ENCODE measurements at regions of chr3 and their contacts with region 1.

Region 1: GRCh38 chr3:149717391-149718056 is 34.8 kb downstream of the COMMD2 start:
- DNase-seq: peak; percentile 79
- H3K4me3 ChIP-seq: no peak overlapping the region
- H3K27ac ChIP-seq: peak overlapping the region in 3 of 4 donors; percentile 2 to 38 (median 34)
- H3K4me1 ChIP-seq: peaks cover 0 to 7% (median 6%) of the 10 kb centered on the region in 4 donors
- H3K27me3 ChIP-seq: no peaks in the 10 kb centered on the region
- CTCF ChIP-seq: peak; percentile 74 to 80 (median 78)
- EP300 ChIP-seq: no peak
- POLR2A ChIP-seq: no peak

Region 2: GRCh38 chr3:149512209-149512782 is 205.2 kb before region 1 on chr3:
- intact Hi-C with region 1: loop called (anchors 1 kb)
- DNase-seq: peak; percentile 85
- H3K4me3 ChIP-seq: no peak overlapping the region
- H3K27ac ChIP-seq: no peak overlapping the region
- H3K4me1 ChIP-seq: peaks cover 0 to 17% (median 11%) of the 10 kb centered on the region in 4 donors
- H3K27me3 ChIP-seq: no peaks in the 10 kb centered on the region
- CTCF ChIP-seq: peak; percentile 67 to 81 (median 76)
- EP300 ChIP-seq: no peak
- POLR2A ChIP-seq: no peak

Region 3: DNA sequence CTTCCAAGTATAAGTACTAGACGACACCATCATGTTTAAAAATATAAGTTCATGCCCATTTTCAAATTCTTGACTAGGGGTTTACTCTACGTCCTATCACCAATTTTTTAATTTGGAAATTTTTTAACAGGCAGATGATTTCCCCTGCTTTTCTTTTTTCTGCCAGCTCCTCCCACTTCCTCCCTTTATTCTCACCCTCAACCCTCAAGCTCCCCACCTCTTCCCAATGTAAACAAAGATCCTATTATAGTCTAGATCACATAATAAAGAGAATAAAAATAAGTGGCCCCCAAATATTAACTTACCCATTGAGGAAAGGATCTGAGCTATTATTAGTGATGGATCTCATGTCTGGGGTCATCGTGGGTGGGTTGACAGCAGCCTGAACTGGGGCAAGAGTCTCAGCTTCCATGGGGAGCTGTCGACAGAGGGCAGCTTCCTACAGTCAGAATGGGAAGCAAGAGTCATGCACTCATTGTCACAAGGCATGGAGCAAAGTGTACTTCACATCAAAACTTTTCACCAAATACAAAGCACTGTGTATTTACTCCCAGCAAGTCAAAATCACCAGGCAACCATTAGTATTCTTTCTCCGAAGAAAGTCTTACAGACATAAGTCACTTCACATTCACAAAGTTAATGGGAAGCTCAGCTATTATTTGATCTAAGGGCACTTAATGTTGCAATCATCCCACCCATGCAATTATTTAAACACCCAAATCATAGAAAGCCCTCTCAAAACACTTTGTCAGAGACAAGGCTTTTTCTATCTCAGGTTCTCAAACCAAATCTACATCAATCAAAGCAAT is 189.8 kb before region 1 on chr3:
- intact Hi-C with region 1: loop called (anchors 5 kb)
- DNase-seq: no peak
- H3K4me3 ChIP-seq: no peak overlapping the region
- H3K27ac ChIP-seq: peak overlapping the region; percentile 52 to 66 (median 56)
- H3K4me1 ChIP-seq: peaks cover 0 to 62% (median 37%) of the 10 kb centered on the region in 4 donors
- H3K27me3 ChIP-seq: no peaks in the 10 kb centered on the region
- CTCF ChIP-seq: peak in 1 of 4 experiments; percentile 26
- EP300 ChIP-seq: no peak
- POLR2A ChIP-seq: no peak

Region 4: DNA sequence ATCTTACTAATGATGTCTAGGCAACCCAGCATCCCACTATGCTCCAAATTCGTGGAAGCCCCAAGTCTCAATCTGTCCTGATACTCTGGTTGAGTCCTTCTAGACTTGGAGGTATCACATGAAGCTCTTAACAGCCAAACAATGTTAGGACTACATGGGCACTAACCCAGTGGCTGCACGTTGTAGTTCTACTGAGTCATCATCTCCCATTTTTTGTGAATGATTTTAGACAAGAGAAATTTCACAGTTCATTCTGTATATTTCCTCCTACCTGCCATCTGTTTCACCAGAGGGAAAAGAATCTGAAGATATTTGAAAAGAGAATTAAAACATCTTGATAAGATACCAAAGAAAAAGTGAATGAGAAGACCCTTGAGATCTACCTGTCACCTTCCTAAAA is 49.9 kb before region 1 on chr3:
- intact Hi-C with region 1: no loop called
- DNase-seq: no peak
- H3K4me3 ChIP-seq: no peak overlapping the region
- H3K27ac ChIP-seq: no peak overlapping the region
- H3K4me1 ChIP-seq: no peaks in the 10 kb centered on the region
- H3K27me3 ChIP-seq: no peaks in the 10 kb centered on the region
- CTCF ChIP-seq: no peak
- EP300 ChIP-seq: no peak
- POLR2A ChIP-seq: no peak

Region 5: DNA sequence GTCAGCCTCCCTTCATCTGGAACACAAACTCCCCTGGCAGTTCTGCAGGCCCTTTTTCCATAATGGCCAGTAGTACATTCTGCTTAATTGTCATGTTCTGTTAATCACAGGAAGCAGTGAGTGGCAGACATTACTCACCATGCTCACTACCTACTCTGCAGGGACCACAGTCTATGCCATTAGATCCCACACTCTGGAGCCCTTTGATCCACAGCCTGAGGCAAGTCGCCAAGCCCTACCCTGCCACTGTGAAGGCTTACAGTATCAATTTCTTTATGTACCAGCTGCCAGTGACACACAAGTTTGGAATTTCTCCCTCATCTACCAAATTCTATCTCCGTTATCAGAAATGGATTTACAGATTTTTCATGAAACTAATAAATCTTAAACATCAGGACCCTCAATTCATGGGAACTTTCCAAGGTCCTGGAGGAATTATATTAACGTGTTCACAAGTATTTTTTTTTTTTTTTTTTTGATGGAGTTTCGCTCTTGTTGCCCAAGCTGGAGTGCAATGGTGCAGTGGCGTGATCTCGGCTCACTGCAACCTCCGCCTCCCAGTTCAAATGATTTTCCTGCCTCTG is 39.1 kb before region 1 on chr3:
- intact Hi-C with region 1: loop called (anchors 5 kb)
- DNase-seq: no peak
- H3K4me3 ChIP-seq: no peak overlapping the region
- H3K27ac ChIP-seq: no peak overlapping the region
- H3K4me1 ChIP-seq: no peaks in the 10 kb centered on the region
- H3K27me3 ChIP-seq: no peaks in the 10 kb centered on the region
- CTCF ChIP-seq: no peak
- EP300 ChIP-seq: no peak
- POLR2A ChIP-seq: no peak

Region 6: GRCh38 chr3:150124142-150124541 is 406.6 kb after region 1 on chr3:
- intact Hi-C with region 1: no loop called
- DNase-seq: no peak
- H3K4me3 ChIP-seq: no peak overlapping the region
- H3K27ac ChIP-seq: no peak overlapping the region
- H3K4me1 ChIP-seq: no peaks in the 10 kb centered on the region
- H3K27me3 ChIP-seq: no peaks in the 10 kb centered on the region
- CTCF ChIP-seq: no peak
- EP300 ChIP-seq: no peak
- POLR2A ChIP-seq: no peak